Activated T-helper 1 cell treated with anti-CD3 and anti-CD28 coated beads, Interleukin-12 subunit alpha, Interleukin-12 subunit beta, Interleukin-2, Interleukin-4 antibody, amounts not matched to agents 30 ng/mL and 10 ng/mL and 1 ng/mL, durations not matched to agents 14 hours and 24 hours and 36 hours (primary cell): ENCODE measurements at regions of chr7 and their contacts with region 1.

Region 1: DNA sequence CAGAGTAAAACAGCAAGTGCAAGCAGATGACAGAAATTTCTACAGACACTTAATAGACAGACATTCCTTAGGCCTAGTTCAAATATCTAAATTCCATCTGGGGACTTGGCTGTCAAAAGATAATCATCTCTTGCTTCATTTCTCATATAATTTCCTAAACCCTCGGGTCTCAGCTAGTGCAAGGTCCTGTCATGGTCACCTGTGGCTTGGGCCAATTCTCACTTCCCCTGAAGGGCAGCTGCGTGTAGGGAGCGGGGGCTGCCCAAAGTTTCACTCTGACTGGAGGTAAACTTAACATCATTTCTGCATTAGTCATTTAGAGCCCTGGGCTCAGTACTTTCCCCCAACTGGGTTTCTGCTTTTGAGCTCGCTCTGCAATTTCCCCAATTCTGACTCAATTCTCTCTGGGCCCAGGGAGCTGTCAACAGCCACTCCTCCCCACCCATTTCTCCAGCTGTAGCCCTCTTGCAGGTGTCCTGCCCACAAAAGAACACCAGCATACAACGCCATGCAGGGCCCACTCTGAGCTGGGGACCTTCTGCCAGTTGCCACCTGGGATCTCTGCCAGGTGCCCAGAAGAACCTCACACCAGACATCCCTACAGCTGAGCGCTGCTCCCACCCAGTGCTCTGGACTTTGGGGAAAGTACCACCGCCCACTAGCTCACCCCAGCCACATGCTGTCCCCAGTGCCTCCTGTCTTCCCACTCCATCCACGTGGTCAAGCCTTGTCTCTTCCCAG is 38.0 kb downstream of the VOPP1 start:
- DNase-seq: peak; percentile 84
- H3K4me3 Mint-ChIP-seq: peak overlapping the region; percentile 75
- H3K27ac Mint-ChIP-seq: peak overlapping the region; percentile 98
- H3K4me1 Mint-ChIP-seq: peaks cover 95% of the 10 kb centered on the region
- H3K27me3 Mint-ChIP-seq: no peaks in the 10 kb centered on the region

Region 2: DNA sequence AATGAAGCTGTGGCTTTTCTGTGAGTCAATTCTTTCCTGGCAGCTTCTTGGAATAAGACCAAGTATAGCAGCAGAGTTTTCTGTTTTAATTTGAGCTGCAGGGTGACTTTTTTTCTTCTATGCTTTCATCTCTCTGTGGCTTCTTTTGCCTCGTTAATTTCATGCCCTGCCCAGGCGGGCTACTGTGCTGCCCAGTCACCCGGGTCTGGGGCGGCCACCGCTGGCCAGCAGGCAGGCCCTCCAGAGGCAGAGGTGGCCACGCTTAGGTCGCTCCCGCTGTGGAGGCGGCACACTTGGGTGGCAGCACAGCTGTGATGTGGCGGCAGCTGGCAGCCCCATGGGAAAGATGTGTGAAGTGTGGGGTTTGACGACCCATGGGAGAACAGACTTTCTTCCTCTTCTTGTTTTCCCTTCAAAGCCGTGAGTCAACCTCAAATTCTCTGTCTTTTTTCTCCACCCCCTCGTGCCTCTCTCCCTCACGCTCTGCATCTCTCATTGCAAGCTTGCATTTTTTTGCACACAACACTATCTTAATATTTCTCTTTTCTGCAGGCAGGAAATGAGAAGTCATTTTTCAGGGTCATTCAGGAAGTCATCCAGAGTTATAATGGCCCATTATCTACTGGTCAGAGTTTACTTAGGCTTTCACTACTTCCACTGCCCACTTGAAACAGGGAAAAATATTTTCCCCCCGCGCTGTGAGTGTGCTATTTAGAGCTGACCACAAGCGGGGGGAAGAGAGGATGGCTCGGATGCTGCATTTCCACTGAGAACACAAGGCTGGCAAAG is 447.7 kb before region 1 on chr7:
- intact Hi-C with region 1: loop called (anchors 2 kb)
- DNase-seq: no peak
- H3K4me3 Mint-ChIP-seq: peak overlapping the region; percentile 52
- H3K27ac Mint-ChIP-seq: peak overlapping the region; percentile 51
- H3K4me1 Mint-ChIP-seq: peaks cover 25% of the 10 kb centered on the region
- H3K27me3 Mint-ChIP-seq: peaks cover 29% of the 10 kb centered on the region

Region 3: GRCh38 chr7:55365675-55366460 is 168.5 kb before region 1 on chr7:
- intact Hi-C with region 1: loop called (anchors 1 kb)
- DNase-seq: peak; percentile 94
- H3K4me3 Mint-ChIP-seq: peak overlapping the region; percentile 98
- H3K27ac Mint-ChIP-seq: peak overlapping the region; percentile 98
- H3K4me1 Mint-ChIP-seq: peaks cover 19% of the 10 kb centered on the region
- H3K27me3 Mint-ChIP-seq: peaks cover 8% of the 10 kb centered on the region

Region 4: GRCh38 chr7:55509322-55509721 is 25.0 kb before region 1 on chr7:
- intact Hi-C with region 1: loop called (anchors 1 kb)
- DNase-seq: no peak
- H3K4me3 Mint-ChIP-seq: no peak overlapping the region
- H3K27ac Mint-ChIP-seq: peak overlapping the region; percentile 64
- H3K4me1 Mint-ChIP-seq: peaks cover 76% of the 10 kb centered on the region
- H3K27me3 Mint-ChIP-seq: no peaks in the 10 kb centered on the region

Region 5: DNA sequence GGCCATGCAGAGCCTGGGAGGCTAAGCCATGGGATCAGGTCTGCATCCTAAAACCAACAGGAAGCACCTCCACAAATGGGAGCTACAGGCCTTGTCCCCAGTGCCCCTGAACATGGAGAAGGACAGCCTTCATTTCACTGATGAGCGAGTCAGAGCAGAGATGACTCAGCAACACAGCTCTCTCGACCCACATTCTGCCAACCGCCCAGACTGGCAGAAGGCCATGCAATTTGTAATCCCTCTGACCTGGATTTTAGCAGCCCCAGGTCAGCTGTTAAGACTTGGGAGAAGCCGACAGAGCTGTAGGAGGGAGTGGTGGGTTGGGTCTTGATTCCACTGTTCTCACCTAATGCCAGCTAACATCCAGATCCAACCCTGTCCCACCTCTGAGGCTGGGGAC is 12.5 kb after region 1 on chr7:
- intact Hi-C with region 1: loop called (anchors 1 kb)
- DNase-seq: no peak
- H3K4me3 Mint-ChIP-seq: no peak overlapping the region
- H3K27ac Mint-ChIP-seq: peak overlapping the region; percentile 34
- H3K4me1 Mint-ChIP-seq: peaks cover 88% of the 10 kb centered on the region
- H3K27me3 Mint-ChIP-seq: no peaks in the 10 kb centered on the region

Region 6: GRCh38 chr7:55572378-55573233 is 38.3 kb after region 1 on chr7 and contains the start of gene VOPP1:
- intact Hi-C with region 1: loop called (anchors 1 kb)
- DNase-seq: peak; percentile 57
- H3K4me3 Mint-ChIP-seq: peak within 1 kb of the TSS; percentile 94
- H3K27ac Mint-ChIP-seq: peak within 1 kb of the TSS; percentile 92
- H3K4me1 Mint-ChIP-seq: peaks cover 68% of the 10 kb centered on the region
- H3K27me3 Mint-ChIP-seq: no peaks in the 10 kb centered on the region
- total RNA-seq, gene VOPP1: 96.3 and 102 TPM in 2 replicates

Region 7: GRCh38 chr7:56051339-56052191 is 517.2 kb after region 1 on chr7 and contains the starts of genes CCT6A and PSPH:
- intact Hi-C with region 1: loop called (anchors 5 kb)
- DNase-seq: peak; percentile 89
- H3K4me3 Mint-ChIP-seq: peak within 1 kb of the TSS; percentile 97
- H3K27ac Mint-ChIP-seq: peak within 1 kb of the TSS; percentile 95
- H3K4me1 Mint-ChIP-seq: peaks cover 46% of the 10 kb centered on the region
- H3K27me3 Mint-ChIP-seq: no peaks in the 10 kb centered on the region
- total RNA-seq, gene CCT6A: 308 TPM in 2 replicates
- total RNA-seq, gene PSPH: 17.3 and 19.3 TPM in 2 replicates